Common myeloid progenitor, CD34-positive (primary cell): ENCODE measurements at regions of chr5 and their contacts with region 1.

Region 1: DNA sequence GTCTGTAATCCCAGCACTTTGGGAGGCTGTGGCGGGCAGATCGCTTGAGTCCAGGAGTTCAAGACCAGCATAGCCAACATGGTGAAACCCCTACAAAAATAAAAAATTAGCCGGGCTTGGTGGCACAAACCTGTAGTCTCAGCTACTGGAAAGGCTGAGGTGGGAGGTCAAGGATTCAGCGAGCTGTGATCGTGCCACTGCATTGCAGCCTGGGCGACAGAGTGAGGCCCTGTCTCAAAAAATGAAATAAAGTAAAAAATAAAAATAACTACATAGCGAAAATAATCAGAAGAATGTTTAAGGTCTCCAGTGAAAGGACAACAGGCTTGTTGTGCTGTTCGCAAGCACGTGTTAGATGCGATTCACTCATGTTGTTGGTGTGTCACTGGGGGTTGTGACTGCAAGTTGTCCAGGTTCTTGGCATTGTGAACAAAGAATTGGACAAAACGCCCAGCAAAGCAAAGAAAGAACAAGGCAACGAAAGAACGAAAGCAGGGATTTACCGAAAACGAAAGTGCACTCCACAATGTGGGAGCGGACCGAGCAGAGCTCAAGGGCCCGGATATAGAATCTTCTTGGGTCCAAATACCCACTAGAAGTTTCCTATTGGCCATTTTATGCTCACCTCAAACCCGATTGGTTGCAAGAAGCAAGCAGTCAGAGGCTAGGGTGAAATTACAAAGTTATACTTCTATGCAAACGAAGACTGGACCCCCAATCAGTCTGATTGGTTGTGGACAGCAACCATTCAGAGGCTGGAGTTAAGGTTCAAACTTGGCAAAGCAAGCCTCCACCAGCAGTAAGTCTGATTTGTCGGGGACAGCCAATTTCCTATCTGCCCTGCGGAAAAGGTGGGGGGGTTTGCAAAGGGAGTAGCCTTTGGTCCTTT is 844 bp upstream of the MCCC2 start:
- DNase-seq: peak; percentile 37 to 81 (median 69)
- H3K4me3 ChIP-seq: peak overlapping the region; percentile 52 to 87 (median 73)
- H3K27ac ChIP-seq: peak overlapping the region in 1 of 2 experiments; percentile 89
- H3K4me1 ChIP-seq: peaks cover 4 to 27% (median 15%) of the 10 kb centered on the region in 4 experiments
- H3K27me3 ChIP-seq: no peaks in the 10 kb centered on the region

Region 2: DNA sequence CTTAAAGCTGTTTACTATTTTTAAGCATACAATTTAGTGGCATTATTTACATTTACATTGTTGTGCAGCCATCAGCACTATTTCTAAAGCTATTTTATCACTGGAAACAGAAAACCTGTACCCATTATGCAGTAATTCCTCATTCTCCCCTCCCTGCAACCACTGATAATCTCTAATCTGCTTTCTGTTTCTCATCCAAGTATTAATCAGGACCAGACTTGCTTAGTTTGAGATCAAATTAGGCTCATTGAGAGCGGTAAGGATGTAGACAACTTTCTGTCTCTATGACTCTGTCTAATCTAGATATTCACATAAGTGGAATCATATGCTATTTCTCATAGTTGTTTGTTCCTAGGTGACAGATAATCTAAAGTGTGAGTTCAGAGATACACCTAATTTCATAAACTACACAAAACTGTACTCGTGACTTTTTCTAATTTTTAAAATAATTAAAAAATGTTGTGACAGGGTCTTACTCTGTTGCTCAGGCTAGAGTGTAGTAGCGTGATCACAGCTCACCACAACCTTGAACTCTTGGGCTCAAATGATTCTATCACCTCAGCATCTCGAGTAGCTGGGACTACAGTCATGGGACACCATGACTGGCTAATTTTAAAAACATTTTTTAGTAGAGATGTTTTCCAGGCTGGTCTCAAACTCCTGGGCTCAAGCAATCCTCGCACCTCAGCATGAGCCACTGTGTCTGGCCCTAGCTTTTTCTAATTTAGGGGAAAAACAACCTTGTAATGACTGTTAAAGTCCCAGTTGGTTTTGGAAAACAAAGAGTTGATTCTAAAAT is 93.3 kb before region 1 on chr5:
- CTCF ChIA-PET with region 1: no interaction called
- POLR2A ChIA-PET with region 1: no interaction called
- DNase-seq: no peak
- H3K4me3 ChIP-seq: no peak overlapping the region
- H3K27ac ChIP-seq: peak overlapping the region in 1 of 2 experiments; percentile 38
- H3K4me1 ChIP-seq: no peaks in the 10 kb centered on the region
- H3K27me3 ChIP-seq: no peaks in the 10 kb centered on the region

Region 3: GRCh38 chr5:71533614-71534013 is 52.7 kb before region 1 on chr5:
- CTCF ChIA-PET with region 1: no interaction called
- POLR2A ChIA-PET with region 1: no interaction called
- DNase-seq: peak; percentile 11 to 58 (median 51)
- H3K4me3 ChIP-seq: no peak overlapping the region
- H3K27ac ChIP-seq: no peak overlapping the region
- H3K4me1 ChIP-seq: peaks cover 0 to 3% (median 0%) of the 10 kb centered on the region in 4 experiments
- H3K27me3 ChIP-seq: no peaks in the 10 kb centered on the region

Region 4: GRCh38 chr5:72999916-73000315 is 1413.6 kb after region 1 on chr5:
- CTCF ChIA-PET with region 1: no interaction called
- POLR2A ChIA-PET with region 1: interaction called, 10 read pairs
- DNase-seq: no peak
- H3K4me3 ChIP-seq: no peak overlapping the region
- H3K27ac ChIP-seq: no peak overlapping the region
- H3K4me1 ChIP-seq: no peaks in the 10 kb centered on the region
- H3K27me3 ChIP-seq: no peaks in the 10 kb centered on the region